ENCODE measurements at regions of chr12 and their contacts with region 1.

Region 1: GRCh38 chr12:57520053-57520871 is at the start of gene DDIT3:
- DNase-seq: peak; percentile 100
- H3K4me3 Mint-ChIP-seq: peak within 1 kb of the TSS; percentile 97
- H3K27ac Mint-ChIP-seq: peak within 1 kb of the TSS; percentile 100
- H3K4me1 Mint-ChIP-seq: peaks cover 56% of the 10 kb centered on the region
- H3K27me3 Mint-ChIP-seq: no peaks in the 10 kb centered on the region
- total RNA-seq, gene DDIT3: 15.3 and 16.7 TPM in 2 replicates

Region 2: DNA sequence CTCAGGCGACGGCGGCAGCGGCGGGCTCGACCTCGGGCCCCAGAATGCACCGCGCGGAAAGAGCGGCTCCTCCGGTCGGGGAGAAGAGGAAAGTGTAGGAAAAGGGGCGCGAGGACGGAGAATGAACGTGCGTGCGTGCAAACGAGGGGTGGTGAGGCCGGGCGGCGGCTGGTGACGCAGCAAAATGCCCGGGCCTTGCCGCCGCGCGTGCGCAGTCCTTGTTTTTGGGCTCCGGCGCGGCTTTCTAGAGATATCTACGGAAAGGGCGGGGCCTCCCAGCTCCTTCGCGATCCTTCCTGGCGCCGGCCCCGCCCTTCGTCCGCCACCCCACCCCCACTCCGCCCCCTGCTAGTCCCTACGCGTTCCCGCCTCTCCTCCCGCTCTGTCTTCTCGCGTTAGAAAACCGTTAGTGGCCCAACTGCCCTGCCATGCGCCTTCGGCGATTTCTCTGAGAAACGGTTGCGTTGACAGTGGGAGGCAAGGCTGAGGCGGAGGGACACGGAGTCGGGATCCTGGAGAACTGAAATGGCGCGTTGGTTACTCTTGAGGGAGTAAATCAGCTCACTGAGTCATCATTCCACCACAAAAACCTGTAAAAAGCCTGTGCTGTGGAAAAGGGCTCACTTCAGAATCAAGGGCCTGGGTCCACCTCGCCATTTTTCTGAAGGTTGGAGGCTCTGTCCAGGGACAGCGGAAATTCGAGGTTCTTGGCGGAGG is 832.0 kb before region 1 on chr12 and contains the start of gene PTGES3:
- intact Hi-C with region 1: loop called (anchors 5 kb)
- DNase-seq: peak; percentile 99
- H3K4me3 Mint-ChIP-seq: peak within 1 kb of the TSS; percentile 99
- H3K27ac Mint-ChIP-seq: peak within 1 kb of the TSS; percentile 97
- H3K4me1 Mint-ChIP-seq: peaks cover 24% of the 10 kb centered on the region
- H3K27me3 Mint-ChIP-seq: no peaks in the 10 kb centered on the region
- total RNA-seq, gene PTGES3: 351 and 357 TPM in 2 replicates

Region 3: DNA sequence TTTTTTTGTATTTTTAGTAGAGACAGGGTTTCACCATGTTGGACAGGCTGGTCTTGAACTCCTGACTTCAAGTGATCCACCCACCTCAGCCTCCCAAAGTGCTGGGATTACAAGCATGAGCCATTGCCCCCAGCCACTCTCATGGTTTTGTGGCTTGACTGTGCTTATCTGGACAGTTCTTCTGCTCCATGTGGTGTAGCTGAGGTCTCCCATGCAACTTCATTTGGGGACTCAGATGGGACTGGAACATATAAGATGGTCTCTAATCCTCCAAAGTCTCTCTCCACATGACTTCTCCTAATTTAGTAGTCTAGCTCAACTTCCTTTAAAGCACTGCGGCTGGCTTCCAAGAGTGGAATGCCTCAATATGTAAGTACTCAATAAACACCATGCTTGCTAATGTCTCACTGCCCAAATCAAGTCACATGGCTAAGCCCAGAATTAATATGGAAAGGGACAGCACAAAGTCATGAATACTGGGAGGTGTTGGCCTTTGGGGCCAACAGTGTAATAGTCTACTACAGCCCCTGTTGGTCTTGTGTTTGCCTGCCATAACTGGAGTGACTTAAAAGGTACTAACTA is 78.3 kb before region 1 on chr12:
- intact Hi-C with region 1: no loop called
- DNase-seq: no peak
- H3K4me3 Mint-ChIP-seq: no peak overlapping the region
- H3K27ac Mint-ChIP-seq: no peak overlapping the region
- H3K4me1 Mint-ChIP-seq: no peaks in the 10 kb centered on the region
- H3K27me3 Mint-ChIP-seq: peaks cover 14% of the 10 kb centered on the region

Region 4: GRCh38 chr12:57476162-57476992 is 43.9 kb before region 1 on chr12:
- intact Hi-C with region 1: loop called (anchors 1 kb)
- DNase-seq: peak; percentile 93
- H3K4me3 Mint-ChIP-seq: peak overlapping the region; percentile 96
- H3K27ac Mint-ChIP-seq: peak overlapping the region; percentile 97
- H3K4me1 Mint-ChIP-seq: peaks cover 68% of the 10 kb centered on the region
- H3K27me3 Mint-ChIP-seq: no peaks in the 10 kb centered on the region

Region 5: GRCh38 chr12:57546438-57547383 is 26.4 kb after region 1 on chr12 and contains the start of gene DCTN2:
- intact Hi-C with region 1: loop called (anchors 1 kb)
- DNase-seq: peak; percentile 98
- H3K4me3 Mint-ChIP-seq: peak within 1 kb of the TSS; percentile 96
- H3K27ac Mint-ChIP-seq: peak within 1 kb of the TSS; percentile 94
- H3K4me1 Mint-ChIP-seq: peaks cover 42% of the 10 kb centered on the region
- H3K27me3 Mint-ChIP-seq: peaks cover 21% of the 10 kb centered on the region
- total RNA-seq, gene DCTN2: 78.9 and 80.9 TPM in 2 replicates

Region 6: DNA sequence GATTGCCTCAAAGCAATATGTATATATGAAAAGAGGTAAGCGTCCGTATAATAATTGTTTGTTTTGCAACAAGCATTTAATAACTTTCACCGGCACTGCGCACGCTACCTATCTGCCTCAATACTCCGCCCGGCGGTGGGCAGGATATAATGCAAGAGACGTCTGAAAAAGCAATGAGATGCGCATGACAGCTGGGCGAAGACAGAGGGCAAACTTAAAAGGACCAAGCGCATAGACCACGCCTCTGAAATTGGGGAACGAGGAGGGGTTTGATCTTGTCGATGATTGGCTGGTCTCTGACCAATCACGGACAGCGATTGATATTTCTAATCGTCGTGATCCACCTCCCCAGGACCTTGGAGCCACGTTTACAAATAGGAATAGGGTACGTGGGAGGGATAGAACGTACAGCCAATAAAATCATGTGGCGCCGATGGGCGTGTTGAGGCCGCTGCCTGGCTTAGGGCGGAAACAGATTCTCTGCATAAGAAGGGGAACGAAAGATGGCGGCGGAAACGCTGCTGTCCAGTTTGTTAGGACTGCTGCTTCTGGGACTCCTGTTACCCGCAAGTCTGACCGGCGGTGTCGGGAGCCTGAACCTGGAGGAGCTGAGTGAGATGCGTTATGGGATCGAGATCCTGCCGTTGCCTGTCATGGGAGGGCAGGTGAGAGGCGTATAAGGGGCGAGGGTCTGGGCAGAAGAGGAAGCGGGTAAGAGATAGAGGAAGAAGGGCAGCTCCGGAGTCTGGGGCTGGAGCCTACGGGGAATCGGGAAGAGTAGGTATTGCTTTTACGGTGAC is 173.6 kb after region 1 on chr12 and contains the start of gene OS9:
- intact Hi-C with region 1: loop called (anchors 5 kb)
- DNase-seq: peak; percentile 98
- H3K4me3 Mint-ChIP-seq: no peak within 1 kb of the TSS
- H3K27ac Mint-ChIP-seq: no peak within 1 kb of the TSS
- H3K4me1 Mint-ChIP-seq: peaks cover 1% of the 10 kb centered on the region
- H3K27me3 Mint-ChIP-seq: peaks cover 13% of the 10 kb centered on the region
- total RNA-seq, gene OS9: 84.3 and 92.6 TPM in 2 replicates